Activated CD4-positive, alpha-beta T cell treated with anti-CD3 and anti-CD28 coated beads for 36 hours (primary cell): ENCODE measurements at regions of chr15 and their contacts with region 1.

Region 1: DNA sequence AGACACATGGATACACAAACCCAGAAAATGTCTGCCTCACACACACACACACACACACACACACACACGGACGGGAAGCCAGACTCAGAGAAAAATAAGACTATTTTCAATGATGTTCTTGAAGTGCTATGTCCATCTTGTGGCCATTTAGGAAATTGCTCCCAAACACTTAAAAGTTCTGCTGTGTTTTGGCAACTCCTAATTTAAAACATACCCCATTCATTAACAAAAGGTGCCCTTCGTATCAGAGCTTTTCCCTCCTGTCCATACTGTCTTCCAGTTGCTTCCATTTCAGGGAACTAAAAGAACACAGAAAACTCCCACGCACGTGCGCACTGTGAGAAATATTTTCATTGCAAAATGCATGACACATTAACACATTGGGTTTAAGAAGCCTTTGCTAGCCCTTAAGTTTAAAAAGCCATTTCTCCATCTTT is 44.6 kb downstream of the SLC12A1 start:
- DNase-seq: peak; percentile 40
- ATAC-seq: no peak
- H3K4me3 Mint-ChIP-seq: no peak overlapping the region
- H3K27ac Mint-ChIP-seq: no peak overlapping the region
- H3K4me1 Mint-ChIP-seq: no peaks in the 10 kb centered on the region
- H3K27me3 Mint-ChIP-seq: peaks cover 9% of the 10 kb centered on the region

Region 2: DNA sequence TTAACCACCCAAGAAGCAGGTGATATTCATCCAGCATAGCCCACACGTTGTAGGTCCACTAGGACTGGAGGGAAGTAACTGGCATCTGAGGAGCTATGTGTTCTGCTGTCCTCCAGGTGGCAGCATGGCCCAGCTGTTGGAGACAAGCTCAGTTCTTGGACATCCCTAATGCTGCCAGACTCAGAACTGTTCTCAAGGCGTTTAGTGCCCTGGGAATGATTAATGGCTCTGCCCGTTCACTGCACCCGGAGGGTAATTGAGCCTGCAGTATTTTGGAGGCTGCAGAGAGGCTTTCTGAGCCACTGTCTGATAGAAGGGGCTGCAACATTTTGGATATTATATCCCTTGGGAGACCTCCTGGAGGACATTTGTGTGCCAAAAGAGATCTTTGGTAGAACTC is 1054.6 kb before region 1 on chr15:
- CTCF ChIA-PET with region 1: no interaction called
- POLR2A ChIA-PET with region 1: no interaction called
- intact Hi-C with region 1: loop called in 1 of 2 experiments (anchors 1 kb)
- DNase-seq: peak; percentile 75
- ATAC-seq: peak; percentile 36
- H3K4me3 Mint-ChIP-seq: no peak overlapping the region
- H3K27ac Mint-ChIP-seq: no peak overlapping the region
- H3K4me1 Mint-ChIP-seq: no peaks in the 10 kb centered on the region
- H3K27me3 Mint-ChIP-seq: peaks cover 5% of the 10 kb centered on the region

Region 3: GRCh38 chr15:47717036-47717611 is 533.5 kb before region 1 on chr15 and contains the start of gene SEMA6D:
- CTCF ChIA-PET with region 1: no interaction called
- POLR2A ChIA-PET with region 1: no interaction called
- intact Hi-C with region 1: loop called in 1 of 2 experiments (anchors 10 kb)
- DNase-seq: peak; percentile 7
- ATAC-seq: no peak
- H3K4me3 Mint-ChIP-seq: no peak within 1 kb of the TSS
- H3K27ac Mint-ChIP-seq: no peak within 1 kb of the TSS
- H3K4me1 Mint-ChIP-seq: peaks cover 2% of the 10 kb centered on the region
- H3K27me3 Mint-ChIP-seq: peaks cover 51% of the 10 kb centered on the region
- total RNA-seq, gene SEMA6D: not detected

Region 4: DNA sequence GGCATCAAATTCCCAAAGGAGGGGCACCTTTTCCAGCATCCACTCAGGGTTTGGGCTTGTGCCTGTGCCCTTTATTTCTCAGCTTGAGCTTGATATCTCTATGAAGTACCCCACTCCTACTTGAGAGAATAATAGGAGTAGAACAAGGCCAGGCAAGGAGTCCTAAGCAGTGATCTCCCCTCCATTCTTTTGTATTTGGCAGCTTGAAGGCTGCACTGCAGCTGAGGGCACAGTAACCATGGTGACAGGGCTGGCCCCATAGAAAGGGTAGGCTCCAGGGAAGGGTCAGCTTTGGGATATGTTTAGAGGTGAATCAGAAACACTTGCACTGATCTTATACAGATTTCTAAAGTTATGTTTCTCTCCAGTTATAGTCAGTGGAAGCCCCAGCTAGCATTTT is 275.2 kb before region 1 on chr15:
- CTCF ChIA-PET with region 1: no interaction called
- POLR2A ChIA-PET with region 1: no interaction called
- intact Hi-C with region 1: no loop called
- DNase-seq: no peak
- ATAC-seq: no peak
- H3K4me3 Mint-ChIP-seq: no peak overlapping the region
- H3K27ac Mint-ChIP-seq: no peak overlapping the region
- H3K4me1 Mint-ChIP-seq: no peaks in the 10 kb centered on the region
- H3K27me3 Mint-ChIP-seq: peaks cover 7% of the 10 kb centered on the region

Region 5: DNA sequence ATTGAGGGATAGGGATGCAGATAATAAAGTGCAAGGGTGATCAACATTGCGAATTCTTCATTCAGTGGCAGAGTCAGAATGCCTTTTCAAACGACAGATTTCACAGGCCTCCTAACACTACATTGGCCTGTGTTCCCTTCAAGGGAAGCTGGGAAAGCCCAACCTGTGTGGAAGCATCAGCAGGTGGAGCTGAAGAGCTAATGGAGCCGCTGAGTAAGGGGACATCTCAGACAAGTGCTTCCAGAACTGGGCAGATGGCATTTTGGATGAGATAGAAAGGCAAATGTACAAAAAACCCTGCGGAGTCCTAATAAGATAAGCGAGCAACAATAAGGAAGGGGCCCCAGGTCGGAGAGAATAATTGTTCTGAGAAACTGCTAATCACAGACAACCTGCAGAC is 138.4 kb before region 1 on chr15:
- CTCF ChIA-PET with region 1: interaction called, 5 read pairs
- POLR2A ChIA-PET with region 1: no interaction called
- intact Hi-C with region 1: loop called in 1 of 2 experiments (anchors 10 kb)
- DNase-seq: no peak
- ATAC-seq: no peak
- H3K4me3 Mint-ChIP-seq: no peak overlapping the region
- H3K27ac Mint-ChIP-seq: no peak overlapping the region
- H3K4me1 Mint-ChIP-seq: no peaks in the 10 kb centered on the region
- H3K27me3 Mint-ChIP-seq: peaks cover 21% of the 10 kb centered on the region